Calu3 (cell line): ENCODE measurements at regions of chr6 and their contacts with region 1.

Region 1: GRCh38 chr6:161694995-161695394 is 421.1 kb upstream of the AGPAT4 start:
- DNase-seq: peak; percentile 17
- H3K4me3 Mint-ChIP-seq: no peak overlapping the region
- H3K27ac Mint-ChIP-seq: no peak overlapping the region
- H3K4me1 Mint-ChIP-seq: no peaks in the 10 kb centered on the region
- H3K27me3 Mint-ChIP-seq: no peaks in the 10 kb centered on the region
- CTCF ChIP-seq: no peak

Region 2: GRCh38 chr6:161486361-161487216 is 208.4 kb before region 1 on chr6:
- CTCF ChIA-PET with region 1: no interaction called
- intact Hi-C with region 1: no loop called
- DNase-seq: peak; percentile 26
- H3K4me3 Mint-ChIP-seq: no peak overlapping the region
- H3K27ac Mint-ChIP-seq: peak overlapping the region; percentile 37
- H3K4me1 Mint-ChIP-seq: peaks cover 20% of the 10 kb centered on the region
- H3K27me3 Mint-ChIP-seq: no peaks in the 10 kb centered on the region
- CTCF ChIP-seq: no peak

Region 3: GRCh38 chr6:161557333-161558107 is 137.5 kb before region 1 on chr6:
- CTCF ChIA-PET with region 1: interaction called, 3 read pairs
- intact Hi-C with region 1: loop called (anchors 5 kb)
- DNase-seq: peak; percentile 8
- H3K4me3 Mint-ChIP-seq: no peak overlapping the region
- H3K27ac Mint-ChIP-seq: no peak overlapping the region
- H3K4me1 Mint-ChIP-seq: no peaks in the 10 kb centered on the region
- H3K27me3 Mint-ChIP-seq: no peaks in the 10 kb centered on the region
- CTCF ChIP-seq: no peak

Region 4: GRCh38 chr6:161618831-161619454 is 76.1 kb before region 1 on chr6:
- CTCF ChIA-PET with region 1: interaction called, 5 read pairs
- intact Hi-C with region 1: loop called (anchors 2 kb)
- DNase-seq: peak; percentile 38
- H3K4me3 Mint-ChIP-seq: no peak overlapping the region
- H3K27ac Mint-ChIP-seq: no peak overlapping the region
- H3K4me1 Mint-ChIP-seq: no peaks in the 10 kb centered on the region
- H3K27me3 Mint-ChIP-seq: no peaks in the 10 kb centered on the region
- CTCF ChIP-seq: peak; percentile 40